ENCODE measurements at regions of chrX and their contacts with region 1.

Region 1: GRCh38 chrX:10098270-10098713 is 58.5 kb upstream of the CLCN4 start:
- DNase-seq: peak; percentile 78
- H3K4me3 Mint-ChIP-seq: peak overlapping the region; percentile 69
- H3K27ac Mint-ChIP-seq: peak overlapping the region; percentile 90
- H3K4me1 Mint-ChIP-seq: peaks cover 46% of the 10 kb centered on the region
- H3K27me3 Mint-ChIP-seq: no peaks in the 10 kb centered on the region

Region 2: DNA sequence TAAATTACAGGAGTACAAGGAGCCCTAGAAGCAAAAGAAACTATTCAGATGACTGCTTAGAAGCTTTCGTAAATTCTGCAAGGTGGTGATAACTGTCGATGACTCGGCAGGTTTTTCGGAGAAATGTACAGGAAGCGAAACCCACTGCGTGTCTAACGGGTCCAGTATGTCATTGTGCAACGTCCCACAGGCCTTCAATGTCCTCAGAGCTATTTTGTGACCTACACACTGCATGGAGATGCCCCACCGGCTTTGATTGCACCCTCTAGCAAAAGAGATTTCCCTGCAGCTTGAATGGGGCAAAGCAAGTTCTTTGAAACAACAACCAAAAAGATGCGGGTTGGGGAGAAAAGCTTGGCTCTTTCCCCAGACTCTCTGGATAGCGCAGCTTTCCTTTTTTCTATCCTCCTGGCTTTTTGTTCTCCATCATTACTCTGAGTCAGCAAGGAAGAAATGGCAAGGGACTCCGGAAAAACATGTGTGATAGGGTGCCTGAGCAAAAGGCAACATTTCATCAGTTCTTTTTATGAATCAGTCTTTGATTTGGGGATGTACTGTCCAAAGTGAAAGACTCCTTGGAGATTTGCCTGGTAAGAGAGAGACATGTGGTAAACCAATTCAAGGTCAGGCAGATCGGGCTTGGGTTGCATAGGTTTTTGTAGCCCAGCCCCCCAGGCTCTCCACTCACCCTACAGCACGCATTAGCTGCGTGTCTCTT is 745.4 kb before region 1 on chrX:
- CTCF ChIA-PET with region 1: no interaction called
- POLR2A ChIA-PET with region 1: no interaction called
- intact Hi-C with region 1: loop called (anchors 5 kb)
- DNase-seq: peak; percentile 72
- H3K4me3 Mint-ChIP-seq: peak overlapping the region; percentile 20
- H3K27ac Mint-ChIP-seq: peak overlapping the region; percentile 80
- H3K4me1 Mint-ChIP-seq: peaks cover 35% of the 10 kb centered on the region
- H3K27me3 Mint-ChIP-seq: no peaks in the 10 kb centered on the region

Region 3: GRCh38 chrX:9829308-9830267 is 268.7 kb before region 1 on chrX:
- CTCF ChIA-PET with region 1: no interaction called
- POLR2A ChIA-PET with region 1: no interaction called
- intact Hi-C with region 1: loop called (anchors 5 kb)
- DNase-seq: peak; percentile 68
- H3K4me3 Mint-ChIP-seq: no peak overlapping the region
- H3K27ac Mint-ChIP-seq: no peak overlapping the region
- H3K4me1 Mint-ChIP-seq: peaks cover 9% of the 10 kb centered on the region
- H3K27me3 Mint-ChIP-seq: peaks cover 38% of the 10 kb centered on the region

Region 4: GRCh38 chrX:9955506-9955905 is 142.8 kb before region 1 on chrX:
- CTCF ChIA-PET with region 1: no interaction called
- POLR2A ChIA-PET with region 1: no interaction called
- intact Hi-C with region 1: no loop called
- DNase-seq: no peak
- H3K4me3 Mint-ChIP-seq: no peak overlapping the region
- H3K27ac Mint-ChIP-seq: no peak overlapping the region
- H3K4me1 Mint-ChIP-seq: no peaks in the 10 kb centered on the region
- H3K27me3 Mint-ChIP-seq: peaks cover 10% of the 10 kb centered on the region

Region 5: DNA sequence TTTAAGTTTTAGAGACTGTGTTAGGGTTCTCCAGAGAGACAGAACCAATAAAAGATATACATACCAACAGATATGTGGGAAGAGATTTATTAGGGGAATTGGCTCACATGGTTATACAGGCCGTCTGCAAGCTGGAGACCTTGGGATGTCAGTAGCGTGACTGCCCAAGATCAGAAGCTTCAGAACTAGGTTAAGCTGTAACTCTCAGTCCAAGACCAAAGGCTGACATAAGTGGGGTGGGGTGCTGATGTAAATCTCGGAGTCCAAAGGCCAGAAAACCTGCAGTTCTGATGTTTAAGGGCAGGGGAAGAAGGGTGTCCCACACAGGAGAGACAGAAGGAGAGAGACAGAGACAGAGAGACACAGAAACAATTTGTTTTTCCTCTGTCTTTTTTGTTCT is 120.7 kb before region 1 on chrX:
- CTCF ChIA-PET with region 1: no interaction called
- POLR2A ChIA-PET with region 1: no interaction called
- intact Hi-C with region 1: no loop called
- DNase-seq: no peak
- H3K4me3 Mint-ChIP-seq: no peak overlapping the region
- H3K27ac Mint-ChIP-seq: no peak overlapping the region
- H3K4me1 Mint-ChIP-seq: no peaks in the 10 kb centered on the region
- H3K27me3 Mint-ChIP-seq: no peaks in the 10 kb centered on the region

Region 6: DNA sequence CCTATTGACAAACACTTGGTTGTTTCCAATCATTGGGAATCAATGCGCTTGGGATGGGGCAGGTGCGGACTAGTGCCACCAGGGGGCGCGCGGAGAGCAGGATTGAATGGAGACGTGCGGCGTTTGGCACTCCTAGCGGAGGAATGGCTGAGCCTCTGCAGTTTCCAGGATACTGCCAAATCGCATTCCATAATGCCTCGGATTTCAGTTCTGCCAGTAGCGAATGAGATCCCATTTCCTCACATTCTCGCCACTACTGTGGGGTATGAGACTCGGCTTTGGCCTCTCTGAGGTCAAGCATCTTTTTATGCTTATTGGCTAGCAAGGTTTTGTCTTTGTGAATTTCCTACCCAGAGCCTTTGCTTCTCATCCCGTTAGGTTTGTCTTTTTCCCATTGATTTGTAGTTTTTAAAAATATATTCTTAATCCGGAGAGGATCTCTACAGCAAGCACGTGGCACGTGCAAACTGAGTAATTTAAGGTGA is 102.4 kb before region 1 on chrX:
- CTCF ChIA-PET with region 1: interaction called, 7 read pairs
- POLR2A ChIA-PET with region 1: no interaction called
- intact Hi-C with region 1: loop called (anchors 1 kb)
- DNase-seq: peak; percentile 78
- H3K4me3 Mint-ChIP-seq: no peak overlapping the region
- H3K27ac Mint-ChIP-seq: no peak overlapping the region
- H3K4me1 Mint-ChIP-seq: peaks cover 20% of the 10 kb centered on the region
- H3K27me3 Mint-ChIP-seq: no peaks in the 10 kb centered on the region

Region 7: GRCh38 chrX:10083809-10084208 is 14.5 kb before region 1 on chrX:
- CTCF ChIA-PET with region 1: interaction called, 23 read pairs
- POLR2A ChIA-PET with region 1: interaction called, 9 read pairs
- intact Hi-C with region 1: loop called (anchors 1 kb)
- DNase-seq: no peak
- H3K4me3 Mint-ChIP-seq: no peak overlapping the region
- H3K27ac Mint-ChIP-seq: no peak overlapping the region
- H3K4me1 Mint-ChIP-seq: peaks cover 48% of the 10 kb centered on the region
- H3K27me3 Mint-ChIP-seq: no peaks in the 10 kb centered on the region

Region 8: DNA sequence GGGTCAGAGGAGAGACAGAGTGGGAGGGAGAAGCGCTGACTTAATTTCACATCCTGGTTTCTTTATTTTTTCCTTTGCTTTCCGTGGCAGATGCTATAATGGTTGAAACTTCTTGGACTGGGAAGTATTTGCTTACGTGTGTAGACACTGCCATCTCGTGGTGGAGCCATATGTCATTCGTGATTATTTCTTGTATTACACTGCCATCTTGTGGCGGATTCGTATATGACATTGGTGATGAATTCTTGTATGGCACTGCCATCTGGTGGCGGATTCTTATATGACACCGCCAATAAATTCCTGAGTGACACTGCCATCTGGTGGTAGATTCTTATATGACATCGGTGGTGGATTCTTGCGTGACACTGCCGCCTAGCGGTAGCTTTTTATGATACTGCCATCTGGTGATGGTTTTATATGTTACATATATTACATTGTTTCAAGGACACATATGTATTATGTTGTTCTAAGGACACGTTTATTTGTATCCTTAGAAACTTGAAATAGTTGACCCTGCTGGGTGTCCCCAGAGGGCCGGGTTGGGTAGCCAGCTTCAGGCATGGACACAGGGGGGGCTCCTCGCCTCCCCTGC is 21.2 kb after region 1 on chrX:
- CTCF ChIA-PET with region 1: interaction called, 40 read pairs
- POLR2A ChIA-PET with region 1: no interaction called
- intact Hi-C with region 1: no loop called
- DNase-seq: peak; percentile 72
- H3K4me3 Mint-ChIP-seq: no peak overlapping the region
- H3K27ac Mint-ChIP-seq: peak overlapping the region; percentile 71
- H3K4me1 Mint-ChIP-seq: peaks cover 19% of the 10 kb centered on the region
- H3K27me3 Mint-ChIP-seq: no peaks in the 10 kb centered on the region

Region 9: DNA sequence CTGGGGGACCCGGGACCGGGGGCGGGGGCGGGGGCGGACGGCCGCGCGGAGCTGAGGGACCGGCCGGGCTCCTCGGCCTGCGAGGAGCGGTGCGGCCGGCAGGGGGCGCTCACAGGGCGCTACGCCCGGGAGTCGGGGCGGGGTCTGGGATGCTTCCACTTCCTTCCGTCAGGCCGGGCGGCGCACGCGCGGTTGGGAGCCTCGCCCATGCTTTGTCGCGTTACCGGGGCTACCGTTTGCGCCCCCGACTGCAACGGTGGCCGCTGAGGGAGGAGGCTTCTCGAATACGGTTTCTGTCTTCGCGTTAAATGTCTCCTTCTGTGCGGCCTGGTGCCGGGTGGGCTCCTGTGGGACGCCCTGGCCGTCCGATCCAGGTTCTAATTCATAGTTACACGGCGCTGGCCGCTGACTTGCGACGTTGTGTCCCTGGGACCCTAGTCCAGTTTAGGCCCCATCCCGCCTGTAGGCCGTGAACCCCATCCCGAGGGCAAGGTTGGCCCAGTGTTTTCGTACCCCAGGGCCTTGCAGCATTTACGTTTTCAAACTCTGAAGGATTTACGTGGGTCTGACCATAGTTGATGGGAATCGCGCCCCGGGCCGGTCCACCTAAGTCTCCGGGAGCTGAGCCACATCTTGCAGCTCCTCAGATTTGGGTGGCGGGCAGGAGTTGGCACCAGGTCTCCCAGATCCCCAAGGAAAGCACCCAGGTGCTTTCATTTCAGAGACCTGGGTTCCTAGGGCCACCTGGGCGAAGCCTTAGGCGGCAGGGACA is 1660.3 kb after region 1 on chrX:
- CTCF ChIA-PET with region 1: no interaction called
- POLR2A ChIA-PET with region 1: no interaction called
- intact Hi-C with region 1: loop called (anchors 10 kb)
- DNase-seq: peak; percentile 92
- H3K4me3 Mint-ChIP-seq: peak overlapping the region; percentile 95
- H3K27ac Mint-ChIP-seq: peak overlapping the region; percentile 99
- H3K4me1 Mint-ChIP-seq: peaks cover 23% of the 10 kb centered on the region
- H3K27me3 Mint-ChIP-seq: peaks cover under 1% of the 10 kb centered on the region

Measured in activated CD4-positive, alpha-beta memory T cell treated with anti-CD3 and anti-CD28 coated beads for 36 hours (primary cell).